Natural killer cell (primary cell): ENCODE measurements at regions of chr7 and their contacts with region 1.

Region 1: GRCh38 chr7:36863901-36864701 is 139.8 kb upstream of the AOAH start:
- DNase-seq: peak; percentile 67 to 75
- ATAC-seq: peak; percentile 77 to 93 (median 89)
- H3K4me3 ChIP-seq: no peak overlapping the region
- H3K4me3 Mint-ChIP-seq: peak overlapping the region; percentile 68
- H3K27ac ChIP-seq: peak overlapping the region; percentile 80
- H3K27ac Mint-ChIP-seq: peak overlapping the region; percentile 92 to 97
- H3K4me1 ChIP-seq: peaks cover 43% of the 10 kb centered on the region
- H3K4me1 Mint-ChIP-seq: peaks cover 81 to 95% of the 10 kb centered on the region in 2 donors
- H3K27me3 ChIP-seq: no peaks in the 10 kb centered on the region
- H3K27me3 Mint-ChIP-seq: no peaks in the 10 kb centered on the region
- CTCF ChIP-seq: no peak

Region 2: GRCh38 chr7:36514289-36515243 is 349.5 kb before region 1 on chr7:
- intact Hi-C with region 1: loop called (anchors 10 kb)
- DNase-seq: no peak
- ATAC-seq: peak in 2 of 3 donors; percentile 24 to 27
- H3K4me3 ChIP-seq: no peak overlapping the region
- H3K4me3 Mint-ChIP-seq: peak overlapping the region; percentile 64
- H3K27ac ChIP-seq: peak overlapping the region; percentile 70
- H3K27ac Mint-ChIP-seq: peak overlapping the region; percentile 92
- H3K4me1 ChIP-seq: peaks cover 38% of the 10 kb centered on the region
- H3K4me1 Mint-ChIP-seq: peaks cover 49 to 73% of the 10 kb centered on the region in 2 donors
- H3K27me3 ChIP-seq: no peaks in the 10 kb centered on the region
- H3K27me3 Mint-ChIP-seq: no peaks in the 10 kb centered on the region
- CTCF ChIP-seq: no peak

Region 3: GRCh38 chr7:36677769-36678437 is 186.2 kb before region 1 on chr7:
- intact Hi-C with region 1: loop called (anchors 5 kb)
- DNase-seq: peak in 1 of 2 donors; percentile 49
- ATAC-seq: peak; percentile 71 to 74 (median 74)
- H3K4me3 ChIP-seq: no peak overlapping the region
- H3K4me3 Mint-ChIP-seq: peak overlapping the region; percentile 67
- H3K27ac ChIP-seq: peak overlapping the region; percentile 79
- H3K27ac Mint-ChIP-seq: peak overlapping the region; percentile 94 to 99
- H3K4me1 ChIP-seq: peaks cover 26% of the 10 kb centered on the region
- H3K4me1 Mint-ChIP-seq: peaks cover 63 to 76% of the 10 kb centered on the region in 2 donors
- H3K27me3 ChIP-seq: no peaks in the 10 kb centered on the region
- H3K27me3 Mint-ChIP-seq: no peaks in the 10 kb centered on the region
- CTCF ChIP-seq: no peak

Region 4: GRCh38 chr7:36784991-36785940 is 78.8 kb before region 1 on chr7:
- intact Hi-C with region 1: loop called (anchors 1 kb)
- DNase-seq: peak; percentile 76 to 94
- ATAC-seq: peak; percentile 76 to 92 (median 84)
- H3K4me3 ChIP-seq: no peak overlapping the region
- H3K4me3 Mint-ChIP-seq: peak overlapping the region; percentile 92
- H3K27ac ChIP-seq: peak overlapping the region; percentile 92
- H3K27ac Mint-ChIP-seq: peak overlapping the region; percentile 96 to 97
- H3K4me1 ChIP-seq: peaks cover 67% of the 10 kb centered on the region
- H3K4me1 Mint-ChIP-seq: peaks cover 73 to 88% of the 10 kb centered on the region in 2 donors
- H3K27me3 ChIP-seq: no peaks in the 10 kb centered on the region
- H3K27me3 Mint-ChIP-seq: no peaks in the 10 kb centered on the region
- CTCF ChIP-seq: no peak

Region 5: DNA sequence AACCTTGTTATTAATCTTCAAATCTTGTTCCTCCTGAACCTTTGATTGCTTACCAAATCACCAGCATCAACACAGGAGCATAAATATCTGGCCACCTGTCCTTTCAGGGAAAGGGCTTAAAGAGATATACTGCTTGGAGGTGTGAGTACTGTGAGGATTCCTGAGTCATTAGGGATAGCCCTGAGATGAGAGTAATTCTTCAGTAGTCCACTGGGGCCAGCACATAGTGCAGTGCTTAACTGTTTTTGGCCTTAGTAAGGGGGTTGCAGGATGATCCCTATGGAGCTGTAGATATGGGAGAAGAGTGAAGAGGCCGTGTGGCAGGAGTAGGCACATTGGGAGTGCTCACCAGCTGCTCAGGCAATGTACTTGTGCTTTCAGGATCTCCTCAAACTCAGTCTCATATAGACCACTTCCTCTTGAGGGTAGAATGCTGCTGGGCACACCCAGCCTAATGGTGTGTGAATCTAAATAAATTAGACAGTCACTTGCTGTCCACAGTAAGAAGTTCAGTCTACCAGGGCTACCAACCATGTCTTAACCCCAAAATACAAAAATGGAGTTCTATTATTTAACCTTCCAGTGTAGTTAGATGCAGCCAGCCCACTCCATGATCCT is 792.9 kb after region 1 on chr7:
- intact Hi-C with region 1: loop called (anchors 10 kb)
- DNase-seq: peak in 1 of 2 donors; percentile 24
- ATAC-seq: peak; percentile 48 to 80 (median 66)
- H3K4me3 ChIP-seq: peak overlapping the region; percentile 12
- H3K4me3 Mint-ChIP-seq: peak overlapping the region; percentile 84
- H3K27ac ChIP-seq: peak overlapping the region; percentile 80
- H3K27ac Mint-ChIP-seq: peak overlapping the region; percentile 92 to 97
- H3K4me1 ChIP-seq: peaks cover 22% of the 10 kb centered on the region
- H3K4me1 Mint-ChIP-seq: peaks cover 77 to 88% of the 10 kb centered on the region in 2 donors
- H3K27me3 ChIP-seq: no peaks in the 10 kb centered on the region
- H3K27me3 Mint-ChIP-seq: no peaks in the 10 kb centered on the region
- CTCF ChIP-seq: no peak